ENCODE measurements at regions of chr16 and their contacts with region 1.

Region 1: GRCh38 chr16:4140652-4141051 is 24.4 kb upstream of the ADCY9 start:
- DNase-seq: peak; percentile 74
- H3K4me3 Mint-ChIP-seq: peak overlapping the region; percentile 39
- H3K27ac Mint-ChIP-seq: peak overlapping the region; percentile 99
- H3K4me1 Mint-ChIP-seq: peaks cover 24% of the 10 kb centered on the region
- H3K27me3 Mint-ChIP-seq: no peaks in the 10 kb centered on the region
- CTCF ChIP-seq: no peak

Region 2: DNA sequence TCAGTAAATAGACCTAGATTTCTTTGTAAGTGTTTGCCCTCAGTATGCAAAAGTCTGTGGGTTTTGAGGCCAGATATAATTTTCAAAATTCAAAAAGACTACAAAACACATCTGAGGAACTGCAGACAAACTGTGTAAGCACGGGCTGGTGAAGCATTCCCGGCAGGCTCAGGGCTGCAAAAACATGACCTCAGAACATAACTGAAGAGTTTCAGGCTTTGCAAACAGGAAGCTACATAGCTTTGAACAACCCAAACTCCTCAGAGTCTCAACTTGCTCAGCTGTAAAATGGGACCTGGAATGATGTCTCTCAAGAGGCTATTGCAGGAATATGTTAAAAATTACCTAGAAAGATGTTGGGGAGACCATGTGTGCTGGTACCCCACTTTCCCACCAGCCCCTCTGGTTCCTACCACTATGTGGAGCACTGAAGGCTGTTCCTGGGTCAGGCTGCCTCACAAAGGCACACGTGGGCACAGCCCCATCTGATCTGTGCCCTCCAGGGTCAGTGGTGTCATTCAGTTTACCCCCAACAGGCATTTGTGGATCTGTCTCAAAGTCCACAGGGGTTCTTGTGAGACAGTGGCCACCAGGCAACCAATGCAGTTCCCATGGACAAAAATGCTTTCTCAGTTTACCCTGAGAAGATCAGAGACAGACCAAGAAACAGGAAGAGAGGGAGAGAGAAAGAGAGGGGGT is 333.1 kb before region 1 on chr16:
- CTCF ChIA-PET with region 1: no interaction called
- POLR2A ChIA-PET with region 1: no interaction called
- intact Hi-C with region 1: no loop called
- DNase-seq: no peak
- H3K4me3 Mint-ChIP-seq: no peak overlapping the region
- H3K27ac Mint-ChIP-seq: no peak overlapping the region
- H3K4me1 Mint-ChIP-seq: peaks cover 11% of the 10 kb centered on the region
- H3K27me3 Mint-ChIP-seq: no peaks in the 10 kb centered on the region
- CTCF ChIP-seq: no peak

Region 3: DNA sequence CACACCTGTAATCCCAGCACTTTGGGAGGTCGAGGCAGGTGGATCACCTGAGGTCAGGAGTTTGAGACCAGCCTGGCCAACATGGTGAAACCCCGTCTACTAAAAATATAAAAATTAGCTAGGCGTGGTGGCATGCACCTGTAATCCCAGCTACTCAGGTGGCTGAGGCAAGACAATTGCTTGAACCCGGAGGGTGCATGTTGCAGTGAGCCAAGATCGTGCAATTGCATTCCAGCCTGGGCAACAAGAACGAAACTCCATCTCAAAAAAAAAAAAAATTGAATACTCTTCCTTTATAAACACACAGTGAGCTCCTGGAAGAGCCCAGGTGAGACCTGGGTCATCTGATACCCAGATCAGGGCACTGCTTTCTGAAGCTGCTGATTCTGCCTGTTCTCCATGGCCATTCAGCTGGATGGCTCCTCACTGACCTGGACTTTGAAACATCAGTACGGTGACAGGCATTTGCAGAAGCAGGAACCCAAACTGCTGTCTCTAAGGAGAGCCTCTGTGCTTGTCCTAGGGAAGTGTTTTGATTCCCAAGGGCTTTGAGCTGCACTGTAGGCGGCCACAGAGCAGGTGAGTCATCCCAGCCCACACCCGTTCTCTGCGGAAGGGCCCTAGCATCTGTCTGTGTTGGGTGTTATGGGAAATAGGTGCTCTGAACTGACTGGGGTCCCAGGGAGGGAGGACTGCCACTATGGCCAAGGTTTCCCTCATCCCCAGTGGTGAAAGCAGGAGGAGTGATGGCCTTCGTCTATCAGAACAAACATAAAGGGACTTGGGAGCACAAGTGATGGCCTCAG is 36.2 kb after region 1 on chr16:
- CTCF ChIA-PET with region 1: interaction called, 3 read pairs
- POLR2A ChIA-PET with region 1: interaction called, 19 read pairs
- intact Hi-C with region 1: no loop called
- DNase-seq: peak; percentile 77
- H3K4me3 Mint-ChIP-seq: no peak overlapping the region
- H3K27ac Mint-ChIP-seq: no peak overlapping the region
- H3K4me1 Mint-ChIP-seq: peaks cover 20% of the 10 kb centered on the region
- H3K27me3 Mint-ChIP-seq: no peaks in the 10 kb centered on the region
- CTCF ChIP-seq: no peak

Region 4: GRCh38 chr16:4183237-4184036 is 42.8 kb after region 1 on chr16:
- CTCF ChIA-PET with region 1: no interaction called
- POLR2A ChIA-PET with region 1: interaction called, 19 read pairs
- intact Hi-C with region 1: no loop called
- DNase-seq: peak; percentile 91
- H3K4me3 Mint-ChIP-seq: peak overlapping the region; percentile 65
- H3K27ac Mint-ChIP-seq: peak overlapping the region; percentile 49
- H3K4me1 Mint-ChIP-seq: peaks cover 12% of the 10 kb centered on the region
- H3K27me3 Mint-ChIP-seq: no peaks in the 10 kb centered on the region
- CTCF ChIP-seq: no peak

Region 5: DNA sequence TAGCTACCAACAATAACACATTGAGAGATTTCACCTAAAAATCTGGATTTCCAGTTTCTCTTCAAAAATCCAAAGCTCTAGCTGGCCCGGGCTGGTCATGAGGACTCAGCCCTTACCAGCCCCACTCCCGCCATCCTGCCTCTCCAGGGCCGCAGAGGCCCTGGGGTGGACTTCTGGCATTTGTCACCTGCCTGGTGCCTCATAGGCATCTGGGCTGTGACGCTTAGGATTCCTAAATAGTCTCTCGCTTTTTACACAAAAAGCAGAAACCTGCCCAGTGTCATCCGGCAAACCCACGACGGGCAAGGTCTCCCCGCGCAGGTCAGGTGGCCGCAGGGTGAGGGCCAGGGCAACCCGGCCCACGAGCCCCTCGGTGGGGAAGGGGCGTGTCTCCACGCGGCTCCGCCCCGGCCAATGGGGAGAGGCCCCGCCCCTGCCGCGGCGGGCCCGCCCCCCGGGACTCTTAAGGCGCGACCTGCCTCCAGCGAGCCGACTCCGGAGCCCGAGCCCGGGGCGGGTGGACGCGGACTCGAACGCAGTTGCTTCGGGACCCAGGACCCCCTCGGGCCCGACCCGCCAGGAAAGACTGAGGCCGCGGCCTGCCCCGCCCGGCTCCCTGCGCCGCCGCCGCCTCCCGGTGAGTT is 230.8 kb after region 1 on chr16 and contains the start of gene VASN:
- CTCF ChIA-PET with region 1: no interaction called
- POLR2A ChIA-PET with region 1: no interaction called
- intact Hi-C with region 1: no loop called
- DNase-seq: peak; percentile 68
- H3K4me3 Mint-ChIP-seq: peak within 1 kb of the TSS; percentile 69
- H3K27ac Mint-ChIP-seq: no peak within 1 kb of the TSS
- H3K4me1 Mint-ChIP-seq: peaks cover 24% of the 10 kb centered on the region
- H3K27me3 Mint-ChIP-seq: no peaks in the 10 kb centered on the region
- CTCF ChIP-seq: no peak
- total RNA-seq, gene VASN: 4.0 and 7.1 TPM in 2 replicates

Measured in MCF 10A (cell line).